Heart right ventricle (tissue), 16 donors: ENCODE measurements at regions of chr18 and their contacts with region 1.

Region 1: DNA sequence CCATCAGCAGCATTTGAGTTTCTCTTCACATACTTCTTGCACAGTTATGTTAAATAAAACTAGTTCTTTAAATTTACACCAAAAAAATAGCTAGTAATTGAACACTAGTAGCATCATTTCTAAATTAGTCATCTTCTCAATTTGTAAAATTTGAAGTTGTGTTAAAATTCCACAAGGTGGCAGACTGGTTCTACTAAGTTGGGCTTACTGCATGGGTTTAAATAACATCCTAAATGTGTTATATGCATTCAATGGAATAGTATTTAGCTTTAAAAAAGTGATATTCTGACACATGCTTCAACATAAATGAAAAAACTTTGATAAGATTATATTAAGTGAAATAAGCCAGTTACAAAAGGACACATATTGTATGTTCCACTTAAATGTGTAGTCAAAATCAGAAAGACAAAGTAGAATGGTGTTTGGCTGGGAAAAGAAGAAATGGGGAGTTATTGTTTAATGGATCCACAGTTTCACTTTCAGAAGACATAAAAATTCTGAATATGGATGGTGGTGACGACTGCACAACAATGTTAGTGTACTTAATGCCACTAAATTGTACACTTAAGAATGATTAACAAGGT is 28.7 kb upstream of the RPRD1A start:
- DNase-seq: no peak
- ATAC-seq: peak in 1 of 8 donors; percentile 29
- H3K4me3 ChIP-seq: no peak overlapping the region
- H3K27ac ChIP-seq: no peak overlapping the region
- H3K4me1 ChIP-seq: no peaks in the 10 kb centered on the region
- H3K27me3 ChIP-seq: peaks cover 0 to 5% (median 0%) of the 10 kb centered on the region in 7 donors
- CTCF ChIP-seq: peak; percentile 29 to 72 (median 59)

Region 2: GRCh38 chr18:36015629-36016028 is 80.4 kb before region 1 on chr18:
- intact Hi-C with region 1: loop called in 2 of 10 experiments (anchors 5 to 10 kb)
- DNase-seq: no peak
- ATAC-seq: no peak
- H3K4me3 ChIP-seq: no peak overlapping the region
- H3K27ac ChIP-seq: no peak overlapping the region
- H3K4me1 ChIP-seq: peaks cover 0 to 7% (median 0%) of the 10 kb centered on the region in 9 donors
- H3K27me3 ChIP-seq: no peaks in the 10 kb centered on the region
- CTCF ChIP-seq: no peak

Region 3: DNA sequence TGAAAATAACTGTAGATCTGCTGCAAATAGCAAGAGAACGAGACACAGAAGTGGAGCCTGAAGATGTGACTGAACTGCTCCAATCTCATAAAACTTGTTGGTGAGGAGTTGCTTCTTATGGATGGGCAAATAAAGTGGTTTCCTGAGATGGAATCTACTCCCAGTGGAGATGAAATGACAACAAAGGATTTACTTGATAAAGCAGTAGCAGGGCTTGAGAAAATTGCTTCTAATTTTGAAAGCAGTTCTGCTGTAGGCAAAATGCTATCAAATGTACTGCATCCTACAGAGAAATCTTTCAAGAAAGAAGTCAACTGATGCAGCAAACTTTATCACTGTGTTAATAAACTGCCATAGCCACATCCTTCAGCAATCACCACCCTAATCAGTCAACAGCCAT is 72.7 kb before region 1 on chr18:
- intact Hi-C with region 1: loop called in 2 of 10 experiments (anchors 5 to 10 kb)
- DNase-seq: no peak
- ATAC-seq: no peak
- H3K4me3 ChIP-seq: no peak overlapping the region
- H3K27ac ChIP-seq: no peak overlapping the region
- H3K4me1 ChIP-seq: peaks cover 0 to 4% (median 0%) of the 10 kb centered on the region in 9 donors
- H3K27me3 ChIP-seq: no peaks in the 10 kb centered on the region
- CTCF ChIP-seq: no peak

Region 4: DNA sequence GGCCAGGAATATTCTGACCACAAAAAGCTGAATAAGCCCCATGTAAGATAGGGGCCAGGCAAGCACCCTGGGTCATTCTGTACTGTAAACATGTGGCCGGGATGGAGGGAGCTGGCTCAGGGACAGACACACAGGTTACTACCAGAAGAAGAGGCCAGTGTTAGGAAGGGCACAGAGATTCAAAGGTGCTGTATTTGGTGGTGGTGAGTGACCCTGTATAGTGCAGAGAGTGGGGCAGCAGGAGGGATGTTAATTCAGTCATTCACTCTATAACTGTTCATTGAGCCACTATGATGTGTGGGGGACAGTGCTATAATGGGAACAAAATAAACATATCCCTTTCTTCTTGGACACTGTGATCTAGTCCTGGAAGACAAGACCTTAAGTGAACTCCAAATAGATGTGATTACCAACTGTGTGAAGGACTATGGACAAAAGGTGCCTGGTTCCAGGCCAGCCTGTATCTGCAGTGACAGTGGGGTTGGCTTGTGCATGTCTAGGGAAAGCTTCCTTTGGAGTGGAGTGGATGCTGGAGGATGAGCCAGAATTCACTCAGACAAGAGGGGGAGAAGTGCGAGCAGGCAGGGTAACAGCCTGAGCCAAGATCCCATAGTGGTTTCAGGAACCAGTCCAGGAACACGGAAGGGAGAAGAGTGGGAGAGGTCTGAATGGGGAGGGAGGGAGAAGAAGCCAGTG is 99.5 kb after region 1 on chr18:
- intact Hi-C with region 1: no loop called
- DNase-seq: no peak
- ATAC-seq: peak in 4 of 8 donors; percentile 30 to 76 (median 62)
- H3K4me3 ChIP-seq: no peak overlapping the region
- H3K27ac ChIP-seq: no peak overlapping the region
- H3K4me1 ChIP-seq: peaks cover 0 to 8% (median 0%) of the 10 kb centered on the region in 9 donors
- H3K27me3 ChIP-seq: no peaks in the 10 kb centered on the region
- CTCF ChIP-seq: no peak

Region 5: DNA sequence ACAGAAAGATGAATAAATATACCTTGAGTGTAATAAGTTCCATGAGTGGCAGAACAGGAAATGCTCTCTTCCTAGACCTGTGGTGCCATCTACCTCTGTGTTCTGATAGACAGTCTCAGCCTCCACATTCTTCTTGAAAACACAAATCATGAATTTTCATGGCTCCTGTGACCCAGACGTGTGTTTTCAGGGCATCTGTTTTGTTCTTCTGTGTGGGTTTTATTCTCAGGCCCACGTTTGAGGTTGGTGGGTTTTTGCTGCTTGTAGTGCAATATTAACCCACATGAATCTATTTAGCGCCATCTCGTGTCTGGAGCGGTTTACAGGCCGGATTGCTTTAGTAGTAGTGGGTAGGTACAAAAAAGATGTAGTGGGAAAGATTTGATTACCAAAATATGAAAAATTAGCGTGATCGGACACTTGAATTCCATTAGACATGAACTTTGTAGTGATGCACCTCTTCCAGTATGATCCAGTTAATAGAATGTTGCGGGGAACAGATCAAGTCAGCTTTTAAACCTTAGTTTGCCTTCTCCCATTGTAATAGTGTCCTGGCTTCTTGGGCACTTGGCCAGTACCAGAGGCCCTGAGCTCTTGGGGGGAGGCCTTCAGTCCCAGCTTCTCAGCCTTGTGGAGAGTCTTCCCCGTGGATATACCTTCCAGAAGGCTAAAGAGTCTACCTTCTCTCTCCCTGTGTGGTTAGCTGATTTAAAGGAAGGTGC is 476.3 kb after region 1 on chr18:
- intact Hi-C with region 1: loop called in 1 of 10 experiments (anchors 10 kb)
- DNase-seq: no peak
- ATAC-seq: peak; percentile 45 to 82 (median 68)
- H3K4me3 ChIP-seq: no peak overlapping the region
- H3K27ac ChIP-seq: peak overlapping the region in 5 of 10 donors; percentile 1 to 31 (median 7)
- H3K4me1 ChIP-seq: peaks cover 0 to 22% (median 5%) of the 10 kb centered on the region in 9 donors
- H3K27me3 ChIP-seq: no peaks in the 10 kb centered on the region
- CTCF ChIP-seq: peak in 8 of 9 donors; percentile 18 to 65 (median 54)